HEK293 (cell line): ENCODE measurements at regions of chr6 and their contacts with region 1.

Region 1: GRCh38 chr6:33014841-33015634 is 5.6 kb upstream of the HLA-DOA start:
- H3K4me3 ChIP-seq: no peak overlapping the region
- H3K27ac ChIP-seq: no peak overlapping the region
- H3K4me1 ChIP-seq: no peaks in the 10 kb centered on the region
- CTCF ChIP-seq: peak; percentile 57

Region 2: DNA sequence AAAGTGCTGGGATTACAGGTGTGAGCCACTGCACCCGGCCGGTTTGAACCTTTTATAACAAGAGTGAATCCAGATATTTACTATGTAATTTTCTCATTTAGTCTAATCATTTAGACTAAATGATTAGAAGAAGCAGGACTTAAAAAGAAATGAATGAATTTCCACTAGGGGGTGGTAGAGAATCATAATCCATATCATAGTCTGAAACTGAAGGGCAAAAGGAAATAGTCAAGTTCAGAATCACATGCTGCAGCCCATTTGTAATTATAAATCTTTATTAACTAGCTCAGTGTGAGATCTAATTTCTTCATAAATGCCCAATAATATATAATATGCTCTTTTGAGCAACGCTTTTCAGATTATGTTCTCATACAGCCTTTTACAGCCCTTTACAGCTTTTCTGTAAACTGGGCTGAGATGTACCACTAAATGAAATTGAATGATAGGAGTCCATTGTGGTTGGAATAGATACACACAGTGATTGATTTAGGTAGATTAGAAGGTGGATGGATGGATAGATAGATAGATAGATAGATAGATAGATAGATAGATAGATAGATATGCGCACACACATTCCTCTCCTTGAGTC is 129.2 kb before region 1 on chr6:
- CTCF ChIA-PET with region 1: interaction called, 11 read pairs
- POLR2A ChIA-PET with region 1: no interaction called
- H3K4me3 ChIP-seq: no peak overlapping the region
- H3K27ac ChIP-seq: no peak overlapping the region
- H3K4me1 ChIP-seq: peaks cover 4% of the 10 kb centered on the region
- CTCF ChIP-seq: peak; percentile 28

Region 3: GRCh38 chr6:32920715-32921114 is 94.3 kb before region 1 on chr6:
- CTCF ChIA-PET with region 1: no interaction called
- POLR2A ChIA-PET with region 1: no interaction called
- H3K4me3 ChIP-seq: no peak overlapping the region
- H3K27ac ChIP-seq: no peak overlapping the region
- H3K4me1 ChIP-seq: no peaks in the 10 kb centered on the region; the same call in 1 of the 2 replicates
- CTCF ChIP-seq: no peak

Region 4: GRCh38 chr6:33000055-33000454 is 15.0 kb before region 1 on chr6:
- CTCF ChIA-PET with region 1: interaction called, 42 read pairs
- POLR2A ChIA-PET with region 1: no interaction called
- H3K4me3 ChIP-seq: no peak overlapping the region
- H3K27ac ChIP-seq: no peak overlapping the region
- H3K4me1 ChIP-seq: no peaks in the 10 kb centered on the region
- CTCF ChIP-seq: peak; percentile 74

Region 5: DNA sequence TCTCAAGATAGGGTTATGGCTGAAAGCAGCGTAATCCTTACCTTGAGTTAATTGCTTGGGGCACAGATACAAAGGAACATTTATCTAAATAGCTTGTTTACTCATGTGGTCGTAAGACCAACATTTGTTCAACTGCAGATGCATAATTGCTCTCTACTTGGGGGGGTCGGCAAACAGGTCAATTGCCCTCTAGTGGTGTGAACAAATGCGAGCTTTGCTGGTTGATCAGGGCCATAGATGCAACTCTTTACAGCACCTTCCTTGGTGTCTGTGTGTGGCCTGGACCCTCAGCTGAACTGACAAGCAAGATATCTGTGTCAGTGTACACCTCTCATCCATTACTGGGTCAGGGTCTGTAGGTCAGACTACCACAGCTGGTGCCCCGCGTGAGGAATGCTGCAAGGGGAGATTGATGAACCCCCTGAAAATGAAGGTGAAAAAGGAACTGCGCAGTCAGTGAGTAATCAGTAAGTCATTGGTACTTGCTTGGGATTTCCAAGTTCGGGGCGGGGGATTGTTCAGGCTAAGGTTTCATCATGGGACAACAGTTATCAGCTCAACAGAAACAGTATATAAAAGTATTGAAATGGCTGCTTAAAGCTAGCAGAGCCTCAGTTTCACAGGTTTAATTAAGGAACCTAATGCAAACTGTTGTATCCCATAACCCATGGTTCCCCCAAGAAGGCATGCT is 34.4 kb after region 1 on chr6:
- CTCF ChIA-PET with region 1: interaction called, 10 read pairs
- POLR2A ChIA-PET with region 1: no interaction called
- H3K4me3 ChIP-seq: no peak overlapping the region
- H3K27ac ChIP-seq: no peak overlapping the region
- H3K4me1 ChIP-seq: no peaks in the 10 kb centered on the region
- CTCF ChIP-seq: no peak

Region 6: DNA sequence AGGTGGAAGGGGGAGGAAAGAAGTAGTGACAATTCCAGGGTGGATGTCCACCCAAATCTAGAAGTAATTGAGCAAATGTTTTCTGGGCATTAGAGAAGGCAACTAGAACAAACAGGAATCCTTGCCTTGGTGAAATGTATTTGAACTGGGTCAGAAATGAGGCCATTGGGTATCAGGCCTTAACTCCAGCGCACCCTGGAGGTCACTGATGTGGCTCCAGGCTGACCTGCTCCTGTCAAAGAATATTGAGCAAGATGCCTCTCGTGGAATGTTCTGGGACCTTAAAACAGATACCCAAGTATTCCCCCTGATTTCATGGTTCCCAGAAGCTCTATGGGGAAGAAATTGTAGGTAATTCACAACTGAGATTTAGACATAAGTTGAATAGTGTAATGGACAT is 67.7 kb after region 1 on chr6:
- CTCF ChIA-PET with region 1: interaction called, 37 read pairs
- POLR2A ChIA-PET with region 1: interaction called, 3 read pairs
- H3K4me3 ChIP-seq: no peak overlapping the region
- H3K27ac ChIP-seq: no peak overlapping the region
- H3K4me1 ChIP-seq: peaks cover 5% of the 10 kb centered on the region
- CTCF ChIP-seq: peak; percentile 48; the same call in 1 of the 2 replicates

Region 7: DNA sequence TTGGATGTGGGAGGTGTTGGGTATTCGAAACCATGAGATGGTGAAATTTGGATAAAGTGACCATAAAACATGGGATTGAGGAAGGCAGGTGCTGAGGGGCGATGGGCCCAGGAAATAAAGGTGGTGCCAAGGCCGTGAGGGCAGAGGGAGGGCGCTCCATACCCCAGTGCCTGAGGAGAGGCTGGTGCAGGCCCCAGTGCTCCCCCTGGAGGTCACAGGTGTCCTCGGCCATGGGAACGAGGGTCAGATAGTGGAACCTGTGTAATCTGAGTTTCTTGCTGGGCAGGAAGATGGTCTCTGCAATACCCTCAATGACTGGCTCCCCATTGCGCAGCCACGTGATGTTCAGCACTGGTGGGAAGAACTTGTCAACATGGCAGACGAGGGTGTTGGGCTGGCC is 76.9 kb after region 1 on chr6:
- CTCF ChIA-PET with region 1: interaction called, 13 read pairs
- POLR2A ChIA-PET with region 1: no interaction called
- H3K4me3 ChIP-seq: no peak overlapping the region
- H3K27ac ChIP-seq: no peak overlapping the region
- H3K4me1 ChIP-seq: peaks cover 5% of the 10 kb centered on the region; the same call in 1 of the 2 replicates
- CTCF ChIP-seq: no peak

Region 8: GRCh38 chr6:33329058-33329457 is 314.0 kb after region 1 on chr6:
- CTCF ChIA-PET with region 1: no interaction called
- POLR2A ChIA-PET with region 1: no interaction called
- H3K4me3 ChIP-seq: no peak overlapping the region
- H3K27ac ChIP-seq: no peak overlapping the region
- H3K4me1 ChIP-seq: no peaks in the 10 kb centered on the region
- CTCF ChIP-seq: no peak